Dorsolateral prefrontal cortex (tissue), 120 donors: ENCODE measurements at regions of chr22 and their contacts with region 1.

Region 1: DNA sequence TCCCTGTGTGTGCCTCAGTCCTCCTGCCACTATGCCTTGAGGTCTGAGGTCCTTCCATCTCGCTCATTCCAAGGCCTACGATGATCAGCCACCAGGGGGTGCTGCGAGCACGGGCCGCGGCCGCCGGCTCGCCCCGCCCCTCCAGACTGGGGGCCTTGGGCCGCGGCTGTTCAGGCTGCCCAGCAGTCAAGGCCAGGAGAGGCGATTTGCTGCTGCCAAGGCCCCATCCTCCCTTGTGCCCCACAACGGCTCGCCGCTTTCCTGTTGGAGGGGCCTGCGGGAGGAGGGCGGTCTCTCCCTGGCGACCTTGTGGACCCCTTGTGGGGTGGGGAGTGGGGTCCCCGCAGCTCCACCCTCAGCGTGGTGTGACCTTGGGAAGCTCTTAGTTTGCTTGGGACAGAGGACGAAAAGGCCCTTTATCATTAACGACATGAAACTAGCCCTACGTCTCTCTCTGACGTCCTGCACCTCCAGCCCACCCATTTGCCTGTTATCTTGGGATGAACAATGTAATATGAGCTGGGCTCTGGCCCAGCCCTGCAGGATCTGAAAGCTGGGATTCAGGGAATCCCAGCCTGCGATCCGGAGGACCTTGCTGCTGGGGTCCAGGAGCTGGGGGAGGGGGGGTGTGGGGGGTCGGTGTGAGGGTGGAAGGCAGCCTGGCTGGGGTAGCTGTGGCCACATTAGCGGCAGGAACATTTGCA is 5.3 kb upstream of the GALR3 start:
- DNase-seq: peak; percentile 70 to 92 (median 81)
- H3K4me3 ChIP-seq: peak overlapping the region; percentile 21 to 70 (median 52)
- H3K27ac ChIP-seq: peak overlapping the region in 40 of 59 donors; percentile 15 to 81 (median 59)
- H3K27me3 ChIP-seq: peaks cover 0 to 8% (median 0%) of the 10 kb centered on the region in 45 donors
- CTCF ChIP-seq: peak; percentile 84 to 99 (median 97)

Region 2: DNA sequence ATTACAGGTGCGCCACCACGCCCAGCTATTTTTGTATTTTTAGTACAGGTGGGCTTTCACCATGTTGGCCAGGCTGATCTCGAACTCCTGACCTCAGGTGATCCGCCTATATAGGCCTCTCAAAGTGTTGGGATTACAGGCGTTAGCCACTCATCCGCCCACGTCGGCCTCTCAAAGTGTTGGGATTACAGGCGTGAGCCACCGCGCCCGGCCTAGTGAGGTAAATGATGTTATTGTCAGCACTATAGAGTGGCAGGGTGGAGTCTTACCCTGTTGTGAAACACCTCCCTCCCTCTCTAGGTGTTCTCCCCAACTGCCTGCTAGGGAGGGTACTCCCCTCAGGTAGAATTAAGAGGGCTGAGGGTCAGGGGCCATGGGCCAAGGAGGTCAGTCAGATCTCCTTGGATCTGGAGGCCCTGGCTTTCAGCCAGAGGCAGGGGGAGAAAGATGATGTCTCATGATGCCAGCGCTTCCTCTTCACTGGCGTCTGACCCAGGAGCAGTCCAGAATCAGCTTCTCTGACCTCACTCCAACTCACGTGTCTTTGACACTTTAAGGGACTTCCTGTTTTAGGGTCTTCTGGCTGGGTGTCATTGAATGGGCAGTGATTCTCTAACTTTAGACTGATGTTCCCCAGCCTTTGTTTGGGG is 207.3 kb before region 1 on chr22:
- intact Hi-C with region 1: no loop called
- DNase-seq: no peak
- H3K4me3 ChIP-seq: peak overlapping the region in 17 of 59 donors; percentile 73 to 98 (median 93)
- H3K27ac ChIP-seq: peak overlapping the region in 39 of 59 donors; percentile 4 to 98 (median 69)
- H3K27me3 ChIP-seq: no peaks in the 10 kb centered on the region
- CTCF ChIP-seq: no peak

Region 3: DNA sequence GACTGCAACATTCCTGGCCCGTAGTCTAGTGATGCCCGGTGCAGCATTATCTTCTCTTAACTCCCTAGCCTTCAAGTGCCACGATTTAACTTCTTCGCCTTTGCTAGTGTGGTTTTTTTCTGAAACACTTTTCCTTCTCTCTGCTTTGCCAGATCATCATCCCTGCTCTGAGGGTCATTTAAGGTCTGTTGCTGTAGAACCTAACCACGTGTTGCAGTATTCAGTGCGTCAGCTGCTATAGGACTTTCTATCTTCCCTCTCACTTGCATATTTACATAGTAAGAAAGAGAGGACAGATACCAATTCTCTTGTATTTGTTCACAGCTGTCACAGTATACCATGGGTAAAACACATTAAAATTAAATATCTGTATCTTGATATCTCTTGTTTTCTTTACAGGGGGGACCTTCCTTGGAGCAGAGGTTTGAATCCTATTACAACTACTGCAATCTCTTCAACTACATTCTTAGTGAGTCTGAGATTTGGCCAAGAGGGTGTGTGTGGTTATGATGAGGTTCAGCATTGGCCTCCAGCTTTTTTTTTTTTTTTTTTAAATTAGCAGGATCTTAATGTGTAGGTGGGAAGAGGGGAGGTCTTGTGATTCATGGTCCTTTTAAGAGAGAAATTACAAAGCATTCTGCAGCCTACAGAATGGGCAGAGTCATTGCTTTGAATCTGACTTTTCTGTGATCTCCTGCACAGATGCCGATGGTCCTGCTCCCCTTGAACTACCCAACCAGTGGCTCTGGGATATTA is 44.9 kb after region 1 on chr22:
- intact Hi-C with region 1: loop called (anchors 1 to 2 kb)
- DNase-seq: no peak
- H3K4me3 ChIP-seq: no peak overlapping the region
- H3K27ac ChIP-seq: peak overlapping the region in 2 of 59 donors; percentile 6 to 34
- H3K27me3 ChIP-seq: no peaks in the 10 kb centered on the region
- CTCF ChIP-seq: no peak

Region 4: GRCh38 chr22:37933711-37934376 is 116.0 kb after region 1 on chr22:
- intact Hi-C with region 1: loop called in 1 of 2 experiments (anchors 10 kb)
- DNase-seq: peak; percentile 81 to 90 (median 84)
- H3K4me3 ChIP-seq: peak overlapping the region in 1 of 59 donors; percentile 12
- H3K27ac ChIP-seq: peak overlapping the region in 54 of 59 donors; percentile 14 to 84 (median 69)
- H3K27me3 ChIP-seq: no peaks in the 10 kb centered on the region
- CTCF ChIP-seq: peak; percentile 42 to 99 (median 94)

Region 5: GRCh38 chr22:37953437-37954179 is 135.8 kb after region 1 on chr22 and contains the starts of genes C22orf23 and POLR2F:
- intact Hi-C with region 1: loop called in 1 of 2 experiments (anchors 5 kb)
- DNase-seq: peak; percentile 86 to 95 (median 92)
- H3K4me3 ChIP-seq: peak within 1 kb of the TSS; percentile 66 to 100 (median 94)
- H3K27ac ChIP-seq: peak within 1 kb of the TSS in 43 of 59 donors; percentile 7 to 90 (median 66)
- H3K27me3 ChIP-seq: no peaks in the 10 kb centered on the region
- CTCF ChIP-seq: peak in 50 of 56 donors; percentile 5 to 64 (median 35)
- total RNA-seq, gene C22orf23: 0.25 to 2.9 (median 1.1) TPM in 115 of 120 experiments, not detected in the others
- total RNA-seq, gene POLR2F: 64.4 to 251 (median 103) TPM

Region 6: DNA sequence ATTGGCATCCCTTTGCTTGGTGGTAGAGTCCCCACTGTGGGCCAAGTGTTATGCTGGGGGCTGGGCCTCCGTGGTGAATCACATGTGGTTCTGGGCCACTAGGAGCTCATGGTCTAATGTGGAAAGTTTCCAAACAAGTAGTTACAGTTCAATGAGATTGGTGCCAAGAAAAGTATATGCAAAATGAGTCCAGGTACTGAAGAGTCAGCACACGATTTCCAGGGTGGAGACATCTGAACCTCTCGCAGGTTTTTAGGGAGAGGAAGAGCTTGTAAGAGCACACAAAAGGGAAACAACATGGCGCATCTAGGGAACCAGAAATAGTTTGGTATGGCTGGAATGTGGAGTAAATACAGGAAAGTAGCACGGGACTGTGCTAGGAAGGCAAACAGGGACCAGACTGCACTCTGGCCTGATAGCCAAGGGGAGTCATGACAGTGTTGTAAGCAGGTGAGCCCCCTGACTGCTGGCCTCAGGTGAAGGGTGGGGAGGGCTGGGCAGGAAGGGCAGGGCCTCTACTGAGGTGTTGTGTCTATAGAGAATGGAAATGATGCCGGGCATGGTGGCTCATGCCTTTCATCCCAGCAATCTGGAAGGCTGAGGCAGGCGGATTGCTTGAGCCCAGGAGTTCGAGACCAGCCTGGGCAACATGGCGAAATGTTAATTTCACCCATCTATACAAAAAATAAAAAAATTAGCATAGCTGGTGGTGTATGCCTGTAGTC is 148.2 kb after region 1 on chr22:
- intact Hi-C with region 1: loop called in 1 of 2 experiments (anchors 5 kb)
- DNase-seq: no peak
- H3K4me3 ChIP-seq: no peak overlapping the region
- H3K27ac ChIP-seq: peak overlapping the region in 54 of 59 donors; percentile 49 to 100 (median 92)
- H3K27me3 ChIP-seq: no peaks in the 10 kb centered on the region
- CTCF ChIP-seq: no peak